ENCODE measurements at regions of chr18 and their contacts with region 1.

Region 1: GRCh38 chr18:2529154-2529553 is 42.2 kb downstream of the METTL4 start:
- DNase-seq: no peak
- ATAC-seq: no peak
- H3K4me3 Mint-ChIP-seq: no peak overlapping the region
- H3K27ac Mint-ChIP-seq: no peak overlapping the region
- H3K4me1 Mint-ChIP-seq: no peaks in the 10 kb centered on the region
- H3K27me3 Mint-ChIP-seq: no peaks in the 10 kb centered on the region

Region 2: DNA sequence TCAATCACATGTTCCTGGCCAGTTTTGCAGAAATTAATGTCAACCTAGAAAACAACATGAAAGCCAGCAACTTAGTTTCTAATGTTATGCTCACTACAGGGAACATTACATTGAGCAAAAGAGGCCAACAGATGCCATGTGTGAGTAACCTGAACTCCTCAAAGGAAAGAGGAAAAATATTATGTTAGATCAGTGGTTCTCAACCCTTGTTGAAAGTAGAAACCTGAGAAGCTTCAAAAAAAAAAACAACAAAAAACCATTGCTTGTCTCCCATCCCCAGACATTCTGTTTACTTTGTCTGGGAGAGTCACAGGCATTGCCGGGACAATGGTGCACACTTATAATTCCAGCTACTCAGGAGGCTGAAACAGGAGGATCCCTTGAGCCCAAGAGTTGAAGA is 15.5 kb before region 1 on chr18:
- CTCF ChIA-PET with region 1: no interaction called
- POLR2A ChIA-PET with region 1: no interaction called
- intact Hi-C with region 1: no loop called
- DNase-seq: no peak
- ATAC-seq: no peak
- H3K4me3 Mint-ChIP-seq: no peak overlapping the region
- H3K27ac Mint-ChIP-seq: no peak overlapping the region
- H3K4me1 Mint-ChIP-seq: peaks cover 16% of the 10 kb centered on the region
- H3K27me3 Mint-ChIP-seq: no peaks in the 10 kb centered on the region

Region 3: DNA sequence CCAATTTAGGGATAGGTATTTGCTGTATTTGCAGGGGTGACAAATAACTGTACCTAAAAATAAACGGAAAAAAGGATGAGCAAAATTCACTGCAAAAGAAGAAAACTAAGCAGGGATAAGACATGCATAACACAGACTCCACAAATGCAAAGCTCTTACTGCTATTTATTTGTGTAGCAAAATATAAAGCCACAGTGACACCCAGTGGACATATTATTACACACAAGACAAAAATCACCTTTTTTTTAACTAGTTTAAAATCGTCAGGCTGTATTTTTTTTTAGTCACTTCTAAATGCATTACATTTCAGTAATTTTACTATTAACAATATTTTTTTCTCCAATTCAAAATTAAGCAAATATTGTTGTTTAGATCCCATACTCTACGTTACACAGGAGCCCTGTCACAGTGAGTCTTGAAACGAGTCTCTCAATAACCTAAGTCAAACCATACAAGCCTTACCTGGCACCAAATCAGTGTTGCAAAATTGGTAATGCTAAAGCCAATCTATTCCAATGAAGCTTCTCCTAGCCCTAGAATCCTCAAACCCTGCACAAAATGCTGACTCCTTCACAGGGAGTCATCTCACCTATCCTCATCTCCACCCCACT is 18.4 kb after region 1 on chr18:
- CTCF ChIA-PET with region 1: interaction called, 17 read pairs
- POLR2A ChIA-PET with region 1: no interaction called
- intact Hi-C with region 1: no loop called
- DNase-seq: no peak
- ATAC-seq: peak; percentile 58
- H3K4me3 Mint-ChIP-seq: no peak overlapping the region
- H3K27ac Mint-ChIP-seq: no peak overlapping the region
- H3K4me1 Mint-ChIP-seq: peaks cover 7% of the 10 kb centered on the region
- H3K27me3 Mint-ChIP-seq: no peaks in the 10 kb centered on the region